Panc1 (cell line): ENCODE measurements at regions of chr20 and their contacts with region 1.

Region 1: GRCh38 chr20:38369389-38369788 is 23.1 kb downstream of the LBP start:
- DNase-seq: no peak
- ATAC-seq: peak; percentile 76; the same call in 1 of the 2 replicates
- H3K4me3 ChIP-seq: no peak overlapping the region
- H3K27ac ChIP-seq: no peak overlapping the region
- H3K4me1 ChIP-seq: no peaks in the 10 kb centered on the region
- H3K27me3 ChIP-seq: peaks cover 6% of the 10 kb centered on the region; the same call in 1 of the 2 replicates
- CTCF ChIP-seq: no peak

Region 2: DNA sequence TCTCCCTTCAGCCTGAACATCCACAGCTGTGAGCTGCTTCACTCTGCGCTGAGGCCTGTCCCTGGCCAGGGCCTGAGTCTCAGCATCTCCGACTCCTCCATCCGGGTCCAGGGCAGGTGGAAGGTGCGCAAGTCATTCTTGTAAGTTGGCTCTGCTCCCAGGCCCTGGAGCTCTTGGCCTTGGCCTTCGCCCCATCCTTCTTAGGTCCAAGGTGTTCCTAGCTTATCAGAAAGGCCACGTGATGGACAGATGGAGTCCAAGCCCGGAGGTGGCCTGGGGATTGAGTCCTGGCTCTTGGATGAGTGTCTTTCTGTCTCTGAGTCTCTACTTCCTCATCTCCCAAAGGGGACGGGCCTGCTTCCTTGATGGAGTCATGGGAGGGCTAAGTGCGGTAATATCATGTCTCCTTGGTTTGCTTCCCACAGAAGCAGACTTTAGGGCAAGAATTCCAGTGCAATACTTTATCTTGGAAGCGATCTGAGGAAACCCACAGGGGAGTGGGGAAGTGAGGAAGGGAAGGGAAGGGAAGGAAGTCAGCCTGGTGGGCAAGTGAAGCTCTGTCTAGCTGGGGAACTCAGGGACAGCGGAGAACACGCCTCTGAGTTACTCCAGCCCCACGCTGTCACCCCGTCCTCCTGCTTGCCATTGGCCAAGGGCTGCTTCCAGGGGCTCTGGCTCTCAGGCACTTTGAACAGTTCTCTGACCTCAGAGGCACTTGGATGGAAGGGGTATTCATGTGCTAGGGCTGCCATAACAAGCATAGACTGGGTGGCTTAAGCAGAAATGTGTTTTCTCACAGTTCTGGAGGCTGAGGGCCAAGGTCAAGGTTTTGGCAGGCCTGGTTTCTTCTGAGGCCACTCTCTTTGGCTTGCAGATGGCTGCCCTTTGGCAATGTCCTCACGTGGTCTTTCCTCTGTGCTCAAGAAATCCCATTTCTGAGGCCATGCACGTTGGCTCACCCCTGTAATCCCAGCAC is 18.3 kb before region 1 on chr20:
- CTCF ChIA-PET with region 1: interaction called, 10 read pairs
- POLR2A ChIA-PET with region 1: no interaction called
- in situ Hi-C with region 1: no loop called
- intact Hi-C with region 1: no loop called
- DNase-seq: no peak
- ATAC-seq: no peak
- H3K4me3 ChIP-seq: no peak overlapping the region
- H3K27ac ChIP-seq: no peak overlapping the region
- H3K4me1 ChIP-seq: no peaks in the 10 kb centered on the region
- H3K27me3 ChIP-seq: no peaks in the 10 kb centered on the region
- CTCF ChIP-seq: no peak

Region 3: DNA sequence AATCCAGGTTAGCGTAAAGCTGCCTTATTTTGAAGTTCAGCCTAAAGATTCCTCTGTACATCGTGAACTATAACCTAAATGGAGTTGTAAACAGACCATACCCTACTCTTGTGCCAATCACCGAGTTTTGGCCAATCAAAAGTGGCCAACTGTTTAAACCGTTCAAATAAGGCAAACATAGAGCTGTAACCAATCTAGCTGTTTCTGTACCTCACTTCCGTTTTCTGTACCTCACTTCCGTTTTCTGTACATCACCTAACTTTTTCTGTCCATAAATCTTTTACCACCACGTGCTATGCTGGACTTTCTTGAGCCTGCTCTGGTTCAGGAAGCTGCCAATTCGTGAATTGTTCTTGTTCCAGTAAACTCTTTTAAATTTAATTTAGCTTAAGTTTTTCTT is 16.6 kb after region 1 on chr20:
- CTCF ChIA-PET with region 1: no interaction called
- POLR2A ChIA-PET with region 1: interaction called, 14 read pairs
- in situ Hi-C with region 1: no loop called
- intact Hi-C with region 1: no loop called
- DNase-seq: no peak
- ATAC-seq: no peak
- H3K4me3 ChIP-seq: no peak overlapping the region
- H3K27ac ChIP-seq: no peak overlapping the region
- H3K4me1 ChIP-seq: no peaks in the 10 kb centered on the region
- H3K27me3 ChIP-seq: 0 out of 2 replicates have a peak, but pooled peaks cover 4% of the 10 kb centered on the region
- CTCF ChIP-seq: no peak